ENCODE measurements at regions of chr3 and their contacts with region 1.

Region 1: DNA sequence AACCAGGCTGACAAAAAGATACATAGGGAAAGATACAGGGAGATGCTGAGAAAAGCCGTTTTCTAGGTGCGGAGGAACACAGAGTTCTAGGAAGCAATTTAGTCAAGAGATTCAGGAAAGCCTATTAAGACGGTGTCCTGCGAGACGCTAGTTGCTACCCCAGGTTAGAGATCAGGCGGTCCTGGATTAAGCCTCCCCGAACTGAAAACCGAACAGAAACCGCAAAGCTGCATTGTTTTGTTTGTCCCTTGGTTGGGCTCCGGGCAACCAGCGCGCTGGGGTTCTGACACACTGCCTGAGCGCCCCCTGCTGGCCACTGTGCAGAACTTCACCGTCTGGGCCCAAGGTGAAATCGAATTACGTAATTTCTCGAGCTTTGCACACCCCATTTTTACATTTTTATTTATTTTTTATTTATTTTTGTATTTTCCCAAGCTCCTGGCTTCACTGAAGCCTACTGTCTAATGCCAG is 37.3 kb upstream of the NDUFB4 start:
- DNase-seq: peak; percentile 91
- ATAC-seq: peak; percentile 58 to 67

Region 2: DNA sequence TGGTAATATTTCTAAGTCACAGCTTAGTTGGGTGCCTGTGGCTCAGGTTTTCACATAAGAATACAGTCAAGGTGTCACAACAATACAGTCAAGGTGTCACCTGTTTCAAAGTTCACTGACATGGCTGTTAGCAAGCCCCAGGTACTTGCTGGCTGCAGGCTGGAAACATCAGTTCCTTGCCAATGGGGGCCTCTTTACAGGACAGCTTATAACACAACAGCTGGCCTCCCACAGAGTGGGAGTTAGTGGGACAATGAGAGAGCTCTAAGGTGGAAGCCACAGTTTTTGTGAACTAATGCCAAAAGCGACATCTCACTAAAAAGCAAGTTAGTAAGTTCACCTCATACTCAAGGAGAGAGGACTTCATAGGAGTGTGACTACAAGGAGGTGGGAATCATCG is 319.2 kb before region 1 on chr3:
- intact Hi-C with region 1: loop called (anchors 2 to 5 kb)
- DNase-seq: no peak
- ATAC-seq: no peak

Region 3: DNA sequence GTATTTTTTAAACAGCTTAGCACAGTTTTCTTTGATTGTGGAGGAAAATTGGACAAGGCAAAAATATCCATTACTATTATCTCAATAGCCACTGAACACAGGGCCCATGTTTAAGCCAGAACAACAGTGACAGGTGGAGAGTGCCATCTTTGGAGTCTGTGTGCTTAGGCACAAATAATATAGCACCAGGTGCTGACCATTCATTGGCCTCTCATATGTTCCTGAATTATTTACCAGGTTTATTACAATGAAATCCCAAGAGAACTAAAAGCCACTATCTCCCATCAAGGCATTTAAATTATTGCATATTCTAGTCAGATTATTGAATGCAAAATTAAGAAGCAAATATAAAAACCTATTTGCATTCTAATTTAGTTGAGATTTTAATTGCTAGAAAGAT is 313.4 kb before region 1 on chr3:
- intact Hi-C with region 1: loop called (anchors 2 to 5 kb)
- DNase-seq: no peak
- ATAC-seq: no peak

Region 4: DNA sequence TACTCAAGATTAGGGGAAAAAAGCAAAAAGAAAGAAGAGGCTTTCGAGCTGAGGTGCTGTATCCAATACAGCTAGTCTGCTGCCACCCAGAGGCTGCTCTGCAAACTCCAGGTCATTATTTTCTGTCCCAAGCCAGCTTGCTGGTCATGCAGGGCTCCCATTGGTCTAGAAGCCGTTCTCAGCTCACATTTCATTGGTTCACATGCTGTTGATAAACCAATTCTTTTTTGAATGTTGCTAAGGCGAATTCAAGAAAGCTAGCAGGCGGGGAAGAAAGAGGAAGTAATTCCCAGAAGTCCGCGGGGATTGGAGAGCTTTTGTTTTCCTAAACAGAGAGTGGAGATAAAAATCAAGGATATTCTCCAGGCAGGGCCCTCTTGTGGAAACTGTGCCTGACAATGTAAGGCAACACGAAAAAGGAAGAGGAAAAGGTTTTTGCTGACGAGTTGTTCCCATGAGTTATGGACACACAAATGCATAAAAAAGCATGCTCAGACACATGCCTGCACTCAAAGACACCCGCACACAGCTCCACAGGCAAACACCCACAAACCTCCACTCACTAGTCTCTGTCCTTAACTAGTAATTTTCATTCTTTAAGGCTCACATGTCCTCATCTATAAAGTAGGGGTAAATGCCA is 141.4 kb before region 1 on chr3:
- intact Hi-C with region 1: loop called (anchors 2 to 5 kb)
- DNase-seq: peak; percentile 88
- ATAC-seq: peak; percentile 75 to 85

Region 5: DNA sequence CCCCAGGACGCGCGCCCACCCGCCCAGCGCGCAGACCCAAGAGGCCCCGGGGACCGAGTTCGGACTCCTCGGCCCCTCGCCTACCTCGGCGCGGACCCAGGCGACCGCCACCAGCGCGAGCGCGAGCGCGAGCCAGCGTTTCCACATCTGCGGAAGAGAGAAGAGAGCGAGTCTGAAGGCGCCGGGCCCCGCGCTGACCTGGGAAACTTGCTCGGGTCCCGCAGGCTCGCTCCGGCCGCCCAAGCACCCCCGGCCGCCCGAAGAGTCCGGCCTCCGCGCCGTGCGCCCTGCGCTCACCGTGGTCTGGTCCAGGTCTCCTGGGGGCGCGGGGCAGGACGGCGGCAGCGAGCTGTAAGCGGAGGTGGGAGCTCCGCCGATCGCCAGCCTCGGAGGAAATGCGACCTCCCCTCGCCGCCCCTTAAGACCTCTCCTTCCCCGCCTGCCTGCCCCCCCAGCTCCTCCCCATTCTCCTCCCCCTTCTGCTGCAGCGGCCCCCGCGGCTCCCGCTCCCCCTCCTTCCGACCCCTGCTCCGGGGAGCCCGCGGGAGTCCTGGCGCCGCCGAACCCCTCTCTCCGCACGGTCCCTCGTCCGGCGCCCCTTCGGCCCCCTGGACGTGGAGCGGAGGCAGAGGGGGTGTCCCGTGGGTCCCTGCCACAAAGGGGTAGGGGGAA is 108.1 kb before region 1 on chr3 and contains the start of gene FSTL1:
- intact Hi-C with region 1: loop called in 1 of 2 experiments (anchors 2 kb)
- DNase-seq: peak; percentile 81
- ATAC-seq: peak; percentile 86 to 87
- total RNA-seq, gene FSTL1: 376 to 503 TPM

Region 6: DNA sequence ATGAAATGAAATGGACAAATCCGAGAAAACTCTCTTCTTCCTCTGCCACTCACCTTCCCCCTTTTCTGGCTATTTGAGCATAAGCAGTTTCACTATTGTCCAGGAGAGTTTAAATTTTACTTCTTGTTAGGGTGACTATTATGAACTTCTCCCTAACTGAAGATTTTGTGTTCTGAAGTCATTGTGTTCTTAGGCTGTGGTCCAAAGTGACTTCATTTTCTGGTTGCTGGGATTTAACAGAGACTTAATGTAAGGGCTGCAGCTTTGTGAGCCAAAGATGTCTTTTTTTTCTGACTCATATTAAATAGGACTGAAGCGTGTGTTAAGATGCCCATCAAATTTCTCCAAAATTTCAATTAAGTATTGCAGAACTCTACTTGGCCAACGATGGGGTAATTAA is 61.5 kb before region 1 on chr3:
- intact Hi-C with region 1: no loop called
- DNase-seq: no peak
- ATAC-seq: peak in 1 of 2 donors; percentile 78

Region 7: GRCh38 chr3:120795017-120795648 is 236.3 kb after region 1 on chr3:
- intact Hi-C with region 1: loop called (anchors 2 to 5 kb)
- DNase-seq: peak; percentile 84
- ATAC-seq: peak; percentile 89 to 90

Region 8: GRCh38 chr3:121165397-121165837 is 606.6 kb after region 1 on chr3:
- intact Hi-C with region 1: no loop called
- DNase-seq: no peak
- ATAC-seq: no peak